ENCODE measurements at regions of chr12 and their contacts with region 1.

Region 1: GRCh38 chr12:6285063-6285477 is 25.4 kb upstream of the PLEKHG6 start:
- H3K4me3 ChIP-seq: no peak overlapping the region
- H3K27ac ChIP-seq: no peak overlapping the region
- H3K4me1 ChIP-seq: no peaks in the 10 kb centered on the region
- CTCF ChIP-seq: peak; percentile 84

Region 2: GRCh38 chr12:6039894-6040568 is 245.0 kb before region 1 on chr12:
- CTCF ChIA-PET with region 1: interaction called, 17 read pairs
- POLR2A ChIA-PET with region 1: no interaction called
- H3K4me3 ChIP-seq: no peak overlapping the region
- H3K27ac ChIP-seq: no peak overlapping the region
- H3K4me1 ChIP-seq: no peaks in the 10 kb centered on the region
- CTCF ChIP-seq: peak; percentile 81

Region 3: DNA sequence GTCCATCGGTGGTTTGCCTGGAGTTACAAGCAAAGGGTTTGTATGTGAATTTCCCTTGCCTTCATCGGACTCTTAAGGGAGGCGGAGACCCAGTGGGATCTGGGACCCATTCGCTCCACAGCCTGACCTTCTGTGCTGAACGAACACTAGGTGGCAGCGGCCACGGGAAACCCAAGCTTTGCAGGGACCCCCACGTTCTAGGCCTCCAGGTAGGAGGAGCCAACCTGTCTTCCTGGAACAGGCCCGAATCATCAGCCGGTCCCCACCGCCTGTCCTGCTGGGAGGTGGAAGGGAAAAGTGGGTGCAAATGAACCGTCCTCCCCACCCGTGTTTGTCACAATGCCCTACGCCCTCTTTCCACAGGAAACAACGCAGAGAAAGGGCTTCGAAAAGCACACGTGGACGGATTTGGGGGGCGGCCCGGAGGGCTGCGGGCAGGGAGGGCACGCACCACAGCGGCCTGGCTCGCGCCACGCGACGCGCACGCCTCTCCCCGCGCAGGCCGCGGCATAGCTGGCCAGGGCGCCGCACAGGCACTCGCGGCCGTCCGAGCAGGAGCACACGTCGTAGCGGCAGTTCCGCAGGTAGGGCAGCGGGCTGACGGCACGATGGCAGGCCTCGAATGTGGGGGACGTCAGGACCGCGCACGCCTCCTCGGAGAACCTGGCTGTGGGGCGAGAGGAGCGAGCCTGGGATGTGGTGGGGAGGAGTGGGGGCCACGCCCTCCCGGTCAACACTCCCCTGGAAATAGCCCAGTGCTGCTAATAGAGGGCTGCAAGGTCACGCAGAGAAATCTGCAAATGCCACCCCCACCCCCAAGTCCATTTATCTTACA is 228.4 kb before region 1 on chr12:
- CTCF ChIA-PET with region 1: interaction called, 74 read pairs
- POLR2A ChIA-PET with region 1: no interaction called
- H3K4me3 ChIP-seq: no peak overlapping the region
- H3K27ac ChIP-seq: no peak overlapping the region
- H3K4me1 ChIP-seq: no peaks in the 10 kb centered on the region
- CTCF ChIP-seq: no peak

Region 4: GRCh38 chr12:6062757-6063735 is 222.0 kb before region 1 on chr12:
- CTCF ChIA-PET with region 1: interaction called, 74 read pairs
- POLR2A ChIA-PET with region 1: no interaction called
- H3K4me3 ChIP-seq: no peak overlapping the region
- H3K27ac ChIP-seq: no peak overlapping the region
- H3K4me1 ChIP-seq: no peaks in the 10 kb centered on the region
- CTCF ChIP-seq: peak; percentile 85

Region 5: GRCh38 chr12:6195665-6196535 is 89.2 kb before region 1 on chr12:
- CTCF ChIA-PET with region 1: interaction called, 143 read pairs
- POLR2A ChIA-PET with region 1: interaction called, 6 read pairs
- H3K4me3 ChIP-seq: no peak overlapping the region
- H3K27ac ChIP-seq: no peak overlapping the region
- H3K4me1 ChIP-seq: no peaks in the 10 kb centered on the region
- CTCF ChIP-seq: peak; percentile 81

Region 6: GRCh38 chr12:6295094-6295811 is 10.2 kb after region 1 on chr12:
- CTCF ChIA-PET with region 1: interaction called, 11 read pairs
- POLR2A ChIA-PET with region 1: no interaction called
- H3K4me3 ChIP-seq: no peak overlapping the region
- H3K27ac ChIP-seq: no peak overlapping the region
- H3K4me1 ChIP-seq: 0 out of 2 replicates have a peak, but pooled peaks cover 3% of the 10 kb centered on the region
- CTCF ChIP-seq: no peak

Region 7: GRCh38 chr12:6314776-6315175 is 29.7 kb after region 1 on chr12:
- CTCF ChIA-PET with region 1: no interaction called
- POLR2A ChIA-PET with region 1: no interaction called
- H3K4me3 ChIP-seq: no peak overlapping the region
- H3K27ac ChIP-seq: no peak overlapping the region
- H3K4me1 ChIP-seq: no peaks in the 10 kb centered on the region
- CTCF ChIP-seq: no peak

Measured in HEK293 (cell line).